ENCODE measurements at regions of chr12 and their contacts with region 1.

Region 1: GRCh38 chr12:54958048-54958658 is 26.4 kb downstream of the TESPA1 start:
- DNase-seq: peak in 2 of 4 donors; percentile 59 to 77
- ATAC-seq: peak; percentile 91
- H3K4me3 ChIP-seq: no peak overlapping the region
- H3K27ac ChIP-seq: no peak overlapping the region
- H3K4me1 ChIP-seq: peaks cover 0 to 23% of the 10 kb centered on the region in 2 donors
- H3K27me3 ChIP-seq: no peaks in the 10 kb centered on the region
- CTCF ChIP-seq: peak; percentile 55 to 67

Region 2: DNA sequence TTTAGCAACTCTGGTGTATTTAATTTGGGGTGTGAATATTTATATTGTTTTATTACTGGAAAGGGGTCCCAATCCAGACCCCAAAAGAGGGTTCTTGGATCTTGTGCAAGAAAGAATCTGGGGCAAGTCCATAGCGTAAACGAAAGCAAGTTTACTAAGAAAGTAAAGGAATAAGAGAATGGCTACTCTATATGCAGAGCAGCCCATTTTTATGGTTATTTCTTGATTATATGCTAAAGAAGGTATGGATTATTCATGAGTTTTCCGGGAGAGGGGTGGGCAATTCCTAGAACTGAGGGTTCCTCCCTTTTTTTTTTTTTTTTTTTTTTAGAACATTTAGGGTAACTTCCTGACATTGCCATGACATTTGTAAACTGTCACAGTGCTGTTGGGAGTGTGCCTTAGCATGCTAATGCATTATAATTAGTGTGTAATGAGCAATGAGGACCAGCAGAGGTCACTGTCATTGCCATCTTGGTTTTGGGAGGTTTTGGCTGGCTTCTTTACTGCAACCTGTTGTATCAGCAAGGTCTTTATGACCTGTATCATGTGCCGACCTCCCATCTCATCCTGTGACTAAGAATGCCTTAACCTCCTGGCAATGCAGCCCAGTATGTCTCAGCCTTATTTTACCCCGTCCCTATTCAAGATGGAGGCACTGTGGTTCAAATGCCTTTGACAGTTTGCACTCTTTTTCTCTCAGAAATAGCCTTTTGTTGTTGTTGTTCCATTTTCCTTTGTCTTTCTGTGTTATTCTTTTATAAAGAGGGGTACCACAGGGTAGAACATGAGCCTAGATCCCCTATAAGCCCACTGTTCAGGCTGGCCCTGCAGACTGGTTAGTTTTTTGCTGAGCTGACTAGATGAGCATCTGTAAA is 234.5 kb before region 1 on chr12:
- intact Hi-C with region 1: loop called in 1 of 2 experiments (anchors 10 kb)
- DNase-seq: no peak
- ATAC-seq: peak; percentile 34
- H3K4me3 ChIP-seq: no peak overlapping the region
- H3K27ac ChIP-seq: no peak overlapping the region
- H3K4me1 ChIP-seq: no peaks in the 10 kb centered on the region
- H3K27me3 ChIP-seq: peaks cover 0 to 7% of the 10 kb centered on the region in 2 donors
- CTCF ChIP-seq: peak; percentile 21 to 37

Region 3: DNA sequence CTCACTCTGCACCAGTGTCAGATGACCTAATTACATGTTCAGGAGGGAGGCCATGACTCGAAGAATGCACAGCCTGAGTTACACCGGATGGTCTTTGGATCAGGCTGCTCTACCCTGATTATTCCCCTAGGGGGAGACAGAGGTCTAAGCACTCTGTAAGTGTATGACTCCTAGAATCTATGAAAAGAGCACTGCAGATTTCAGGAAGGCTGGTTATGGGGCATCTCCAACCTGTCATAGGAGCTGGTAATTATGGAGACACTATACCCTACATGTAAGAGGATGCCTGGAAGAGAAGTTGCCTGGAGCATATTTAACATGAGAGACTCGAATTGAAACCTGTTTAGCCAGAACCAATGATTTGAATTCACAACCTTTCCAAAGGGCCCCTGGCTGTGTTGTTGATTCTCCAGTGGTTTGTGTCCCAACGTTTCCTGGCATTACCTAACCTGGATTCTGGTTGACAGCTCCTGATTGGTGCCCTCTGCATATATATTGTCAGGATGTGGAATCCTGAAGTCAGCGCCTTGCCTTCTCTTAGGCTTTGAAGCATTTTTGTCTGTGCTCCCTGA is 104.1 kb before region 1 on chr12 and contains the start of gene MUCL1:
- intact Hi-C with region 1: loop called in 1 of 2 experiments (anchors 10 kb)
- DNase-seq: peak in 2 of 4 donors; percentile 6 to 35
- ATAC-seq: peak; percentile 99
- H3K4me3 ChIP-seq: no peak within 1 kb of the TSS
- H3K27ac ChIP-seq: no peak within 1 kb of the TSS
- H3K4me1 ChIP-seq: peaks cover 0 to 3% of the 10 kb centered on the region in 2 donors
- H3K27me3 ChIP-seq: no peaks in the 10 kb centered on the region
- CTCF ChIP-seq: peak; percentile 77 to 81
- polyA plus RNA-seq, gene MUCL1: not detected